ENCODE measurements at regions of chr20 and their contacts with region 1.

Region 1: GRCh38 chr20:3679749-3680700 is 1.8 kb downstream of the ADAM33 start:
- DNase-seq: peak; percentile 58
- ATAC-seq: peak; percentile 39 to 60

Region 2: GRCh38 chr20:3710703-3711483 is 30.9 kb after region 1 on chr20:
- intact Hi-C with region 1: loop called (anchors 2 kb)
- DNase-seq: peak; percentile 80
- ATAC-seq: peak; percentile 44 to 69

Region 3: GRCh38 chr20:3767427-3768341 is 87.7 kb after region 1 on chr20 and contains the start of gene ADISSP:
- intact Hi-C with region 1: loop called in 1 of 2 experiments (anchors 10 kb)
- DNase-seq: peak; percentile 99
- ATAC-seq: peak; percentile 96
- total RNA-seq, gene ADISSP: 17.2 to 23.2 TPM

Region 4: GRCh38 chr20:3854462-3854871 is 174.4 kb after region 1 on chr20:
- intact Hi-C with region 1: loop called in 1 of 2 experiments (anchors 10 kb)
- DNase-seq: no peak
- ATAC-seq: peak in 1 of 2 donors; percentile 43

Region 5: GRCh38 chr20:4082406-4083097 is 402.5 kb after region 1 on chr20:
- intact Hi-C with region 1: loop called in 1 of 2 experiments (anchors 10 kb)
- DNase-seq: peak; percentile 70
- ATAC-seq: peak; percentile 42 to 64

Region 6: GRCh38 chr20:4108495-4109306 is 428.7 kb after region 1 on chr20:
- intact Hi-C with region 1: no loop called
- DNase-seq: peak; percentile 59
- ATAC-seq: peak; percentile 84 to 89

Measured in left cardiac atrium (tissue), 4 donors.